ENCODE measurements at regions of chr12 and their contacts with region 1.

Region 1: DNA sequence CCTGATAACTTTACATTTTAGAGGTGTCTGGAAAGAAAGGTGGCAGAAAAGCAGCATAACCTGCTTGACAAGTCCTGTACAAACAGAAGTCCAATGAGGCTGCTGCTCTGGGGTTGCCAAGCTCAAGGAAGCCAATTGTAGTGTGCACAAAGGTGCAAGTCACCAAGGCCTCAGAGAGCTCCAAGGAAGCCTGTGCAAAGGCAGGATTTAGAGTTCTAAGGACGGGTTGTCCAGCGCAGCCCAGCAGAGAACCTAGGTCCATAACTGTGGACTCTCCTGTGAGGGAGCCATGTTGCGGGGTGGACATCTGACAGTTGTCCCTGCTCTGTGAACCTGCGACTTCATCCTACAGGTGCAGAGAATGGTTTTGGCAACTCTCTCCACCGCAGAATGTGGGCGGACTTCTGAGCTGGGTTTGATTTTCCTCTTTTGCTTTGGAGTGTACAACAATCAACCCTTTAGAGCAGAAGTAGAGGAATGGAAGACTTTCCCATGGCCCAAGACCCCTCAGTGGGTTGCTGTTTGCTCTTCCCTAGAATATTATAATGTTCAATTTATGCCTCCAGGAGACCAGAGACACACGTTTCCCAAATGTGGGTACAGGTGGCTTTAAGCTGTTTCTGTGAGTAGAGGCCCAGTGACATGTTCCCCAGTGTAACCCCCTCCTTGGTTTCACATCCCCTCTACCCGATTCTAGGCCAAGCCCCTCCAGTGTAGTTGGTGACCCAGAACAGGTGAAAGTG is 81.0 kb downstream of the ETV6 start:
- DNase-seq: no peak
- ATAC-seq: peak; percentile 21
- H3K4me3 ChIP-seq: no peak overlapping the region
- H3K4me3 Mint-ChIP-seq: peak overlapping the region; percentile 39 to 90 (median 71)
- H3K27ac ChIP-seq: peak overlapping the region; percentile 34
- H3K27ac Mint-ChIP-seq: peak overlapping the region; percentile 81 to 98 (median 91)
- H3K4me1 ChIP-seq: peaks cover 25 to 60% of the 10 kb centered on the region in 2 donors
- H3K4me1 Mint-ChIP-seq: peaks cover 61 to 86% (median 76%) of the 10 kb centered on the region in 7 donors
- H3K27me3 ChIP-seq: no peaks in the 10 kb centered on the region
- H3K27me3 Mint-ChIP-seq: no peaks in the 10 kb centered on the region

Region 2: GRCh38 chr12:11707535-11707934 is 22.9 kb before region 1 on chr12:
- CTCF ChIA-PET with region 1: no interaction called
- POLR2A ChIA-PET with region 1: no interaction called
- intact Hi-C with region 1: no loop called
- DNase-seq: no peak
- ATAC-seq: no peak
- H3K4me3 ChIP-seq: no peak overlapping the region
- H3K4me3 Mint-ChIP-seq: no peak overlapping the region
- H3K27ac ChIP-seq: no peak overlapping the region
- H3K27ac Mint-ChIP-seq: peak overlapping the region in 1 of 9 donors; percentile 3
- H3K4me1 ChIP-seq: no peaks in the 10 kb centered on the region
- H3K4me1 Mint-ChIP-seq: peaks cover 13 to 52% (median 31%) of the 10 kb centered on the region in 7 donors
- H3K27me3 ChIP-seq: no peaks in the 10 kb centered on the region
- H3K27me3 Mint-ChIP-seq: no peaks in the 10 kb centered on the region

Region 3: GRCh38 chr12:11765817-11766794 is 35.6 kb after region 1 on chr12:
- CTCF ChIA-PET with region 1: no interaction called
- POLR2A ChIA-PET with region 1: no interaction called
- intact Hi-C with region 1: loop called in 1 of 2 experiments (anchors 5 kb)
- DNase-seq: peak in 4 of 9 donors; percentile 13 to 69 (median 32)
- ATAC-seq: peak; percentile 77
- H3K4me3 ChIP-seq: peak overlapping the region; percentile 12
- H3K4me3 Mint-ChIP-seq: peak overlapping the region; percentile 51 to 93 (median 70)
- H3K27ac ChIP-seq: peak overlapping the region; percentile 36
- H3K27ac Mint-ChIP-seq: peak overlapping the region; percentile 30 to 87 (median 74)
- H3K4me1 ChIP-seq: peaks cover 24 to 33% of the 10 kb centered on the region in 2 donors
- H3K4me1 Mint-ChIP-seq: peaks cover 57 to 96% (median 81%) of the 10 kb centered on the region in 7 donors
- H3K27me3 ChIP-seq: no peaks in the 10 kb centered on the region
- H3K27me3 Mint-ChIP-seq: no peaks in the 10 kb centered on the region